Breast epithelium (tissue), 4 donors: ENCODE measurements at regions of chr3 and their contacts with region 1.

Region 1: DNA sequence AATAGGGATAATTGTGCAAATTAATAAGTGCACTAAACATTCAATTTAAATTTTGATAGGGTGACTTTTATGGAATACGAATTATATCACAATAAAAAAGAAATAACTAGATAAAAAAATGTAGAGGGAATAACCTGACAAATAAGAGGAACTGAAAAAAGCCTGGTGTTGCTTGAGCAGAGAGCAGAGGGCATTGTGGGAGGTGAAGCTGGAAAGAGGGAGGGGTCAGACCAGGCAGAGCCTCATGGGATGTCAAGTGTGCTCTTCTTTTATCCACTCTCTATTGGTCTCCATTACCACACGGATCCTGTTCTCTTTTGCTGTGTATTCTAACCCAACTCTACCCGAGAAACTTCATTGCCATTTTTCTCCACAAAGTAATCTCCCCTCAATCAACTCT is 264.0 kb upstream of the CRBN start:
- DNase-seq: no peak
- H3K4me3 ChIP-seq: no peak overlapping the region
- H3K27ac ChIP-seq: no peak overlapping the region
- H3K4me1 ChIP-seq: no peaks in the 10 kb centered on the region
- H3K27me3 ChIP-seq: no peaks in the 10 kb centered on the region
- CTCF ChIP-seq: no peak
- POLR2A ChIP-seq: no peak

Region 2: DNA sequence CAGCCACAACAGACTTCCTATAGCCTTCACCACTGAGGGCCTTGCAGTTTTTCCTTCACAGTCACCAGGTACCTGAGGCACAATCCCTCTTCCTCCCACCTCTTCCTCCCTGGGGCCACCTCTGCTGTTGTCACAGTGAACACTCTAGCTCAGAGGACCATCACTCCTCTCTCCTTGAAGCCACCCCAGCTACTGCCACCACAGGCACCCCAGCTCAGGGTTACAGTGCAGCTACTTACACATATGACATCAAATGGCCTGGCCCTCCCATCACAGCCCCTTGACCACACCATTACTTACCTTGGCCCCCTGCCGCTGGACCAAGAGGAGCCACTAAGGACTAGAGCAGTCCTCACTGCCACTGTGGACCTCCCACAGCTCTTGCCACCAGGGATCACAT is 50.5 kb before region 1 on chr3:
- intact Hi-C with region 1: loop called (anchors 2 kb)
- DNase-seq: no peak
- H3K4me3 ChIP-seq: no peak overlapping the region
- H3K27ac ChIP-seq: no peak overlapping the region
- H3K4me1 ChIP-seq: no peaks in the 10 kb centered on the region
- H3K27me3 ChIP-seq: no peaks in the 10 kb centered on the region
- CTCF ChIP-seq: no peak
- POLR2A ChIP-seq: no peak

Region 3: DNA sequence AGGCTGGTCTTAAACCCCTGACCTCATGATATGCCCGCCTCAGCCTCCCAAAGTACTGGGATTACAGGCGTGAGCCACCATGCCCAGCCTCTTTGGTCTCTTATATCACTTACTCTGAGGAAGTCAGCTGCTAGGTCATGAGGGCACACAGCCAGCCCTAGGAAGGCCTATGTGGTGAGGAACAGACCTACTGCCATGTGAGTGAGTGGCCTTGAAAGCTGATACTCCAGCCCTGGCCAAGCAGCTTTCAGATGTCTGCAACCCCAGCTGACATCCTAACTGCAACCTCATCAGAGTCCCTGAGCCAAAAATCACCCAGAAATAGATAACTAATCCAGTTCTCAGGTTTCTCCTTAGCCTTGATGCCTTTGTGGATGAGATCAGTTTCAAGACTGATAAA is 1968.3 kb after region 1 on chr3:
- intact Hi-C with region 1: no loop called
- DNase-seq: no peak
- H3K4me3 ChIP-seq: no peak overlapping the region
- H3K27ac ChIP-seq: no peak overlapping the region
- H3K4me1 ChIP-seq: no peaks in the 10 kb centered on the region
- H3K27me3 ChIP-seq: no peaks in the 10 kb centered on the region
- CTCF ChIP-seq: no peak
- POLR2A ChIP-seq: no peak